ENCODE measurements at regions of chr16 and their contacts with region 1.

Region 1: DNA sequence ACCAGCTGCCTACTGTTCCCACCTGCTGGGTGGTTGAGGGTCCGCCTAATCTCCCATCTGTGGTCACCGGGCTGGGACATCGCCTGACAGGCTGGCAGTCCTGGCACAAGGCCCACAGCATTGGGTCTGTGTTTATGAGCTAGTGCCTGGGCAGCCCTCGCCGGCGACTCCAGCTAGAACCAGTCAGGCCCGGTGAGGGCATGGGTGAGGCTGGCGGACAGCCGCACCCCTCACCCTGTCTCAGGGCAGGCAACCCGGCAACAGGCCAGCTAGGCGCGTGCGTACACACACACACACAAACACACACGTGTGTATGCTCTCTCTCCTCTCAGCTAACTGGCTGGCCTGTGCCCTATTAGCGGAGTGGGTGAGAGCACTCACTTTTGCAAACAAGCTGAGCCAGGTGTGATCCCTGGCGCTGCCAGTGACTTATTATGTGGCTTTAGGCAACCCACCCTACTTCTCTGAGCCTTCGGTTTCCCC is 10.4 kb downstream of the HSD11B2 start:
- DNase-seq: peak; percentile 79
- H3K4me3 Mint-ChIP-seq: no peak overlapping the region
- H3K27ac Mint-ChIP-seq: no peak overlapping the region
- H3K4me1 Mint-ChIP-seq: peaks cover 15% of the 10 kb centered on the region
- H3K27me3 Mint-ChIP-seq: no peaks in the 10 kb centered on the region
- CTCF ChIP-seq: no peak

Region 2: GRCh38 chr16:66830422-66831404 is 610.6 kb before region 1 on chr16 and contains the start of gene NAE1:
- CTCF ChIA-PET with region 1: interaction called, 10 read pairs
- intact Hi-C with region 1: no loop called
- DNase-seq: peak; percentile 95
- H3K4me3 Mint-ChIP-seq: peak within 1 kb of the TSS; percentile 71
- H3K27ac Mint-ChIP-seq: no peak within 1 kb of the TSS
- H3K4me1 Mint-ChIP-seq: no peaks in the 10 kb centered on the region
- H3K27me3 Mint-ChIP-seq: peaks cover 24% of the 10 kb centered on the region
- CTCF ChIP-seq: peak; percentile 97
- total RNA-seq, gene NAE1: 79.4 and 84.5 TPM in 2 replicates

Region 3: GRCh38 chr16:67415872-67416793 is 25.2 kb before region 1 on chr16 and contains the start of gene ZDHHC1:
- CTCF ChIA-PET with region 1: interaction called, 10 read pairs
- intact Hi-C with region 1: no loop called
- DNase-seq: peak; percentile 92
- H3K4me3 Mint-ChIP-seq: peak within 1 kb of the TSS; percentile 75
- H3K27ac Mint-ChIP-seq: peak within 1 kb of the TSS; percentile 66
- H3K4me1 Mint-ChIP-seq: peaks cover 42% of the 10 kb centered on the region
- H3K27me3 Mint-ChIP-seq: peaks cover 15% of the 10 kb centered on the region
- CTCF ChIP-seq: peak; percentile 80
- total RNA-seq, gene ZDHHC1: 22.6 and 24.4 TPM in 2 replicates

Region 4: DNA sequence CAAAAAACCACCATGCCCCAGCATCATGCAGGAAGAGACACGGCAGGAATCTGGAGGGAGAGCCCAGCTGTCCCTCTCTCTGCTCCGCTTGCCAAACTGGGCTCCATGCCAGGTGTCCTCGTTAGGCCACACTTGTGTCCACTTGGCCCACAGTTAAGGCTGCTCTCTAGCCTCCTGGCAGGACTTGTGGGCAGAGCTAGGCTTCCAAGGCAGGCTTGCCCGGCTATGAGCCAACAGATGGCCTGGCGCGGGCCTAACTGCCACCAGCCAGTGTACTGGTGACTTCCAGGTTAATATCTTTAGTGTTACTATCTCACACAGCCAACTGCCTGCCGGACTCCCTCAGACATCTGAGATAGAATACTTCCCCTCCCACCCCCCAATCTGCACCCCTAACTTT is 29.0 kb after region 1 on chr16:
- CTCF ChIA-PET with region 1: interaction called, 13 read pairs
- intact Hi-C with region 1: no loop called
- DNase-seq: no peak
- H3K4me3 Mint-ChIP-seq: no peak overlapping the region
- H3K27ac Mint-ChIP-seq: no peak overlapping the region
- H3K4me1 Mint-ChIP-seq: peaks cover 6% of the 10 kb centered on the region
- H3K27me3 Mint-ChIP-seq: no peaks in the 10 kb centered on the region
- CTCF ChIP-seq: no peak